GM10248 (cell line): ENCODE measurements at regions of chr1 and their contacts with region 1.

Region 1: DNA sequence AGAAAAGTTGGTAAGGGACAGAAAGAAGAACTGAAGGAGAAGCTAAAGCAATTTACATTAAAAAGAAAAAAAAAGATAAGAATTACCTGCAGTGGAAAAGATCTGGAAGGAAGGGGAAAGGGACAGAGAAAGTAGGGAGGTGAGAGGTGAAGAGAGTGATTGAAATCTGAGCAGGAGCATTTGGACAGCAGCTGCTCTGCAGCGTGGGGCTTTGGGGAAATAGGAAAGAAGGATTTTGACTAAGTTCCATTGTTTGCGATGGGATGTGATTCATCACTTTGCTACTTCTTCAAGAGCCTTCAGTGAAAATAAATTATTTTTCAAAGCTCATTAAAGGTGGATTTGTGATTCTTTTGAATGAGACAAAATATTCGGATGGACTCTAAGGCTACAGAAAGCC is 26.1 kb upstream of the NMNAT2 start:
- DNase-seq: no peak
- CTCF ChIP-seq: no peak

Region 2: DNA sequence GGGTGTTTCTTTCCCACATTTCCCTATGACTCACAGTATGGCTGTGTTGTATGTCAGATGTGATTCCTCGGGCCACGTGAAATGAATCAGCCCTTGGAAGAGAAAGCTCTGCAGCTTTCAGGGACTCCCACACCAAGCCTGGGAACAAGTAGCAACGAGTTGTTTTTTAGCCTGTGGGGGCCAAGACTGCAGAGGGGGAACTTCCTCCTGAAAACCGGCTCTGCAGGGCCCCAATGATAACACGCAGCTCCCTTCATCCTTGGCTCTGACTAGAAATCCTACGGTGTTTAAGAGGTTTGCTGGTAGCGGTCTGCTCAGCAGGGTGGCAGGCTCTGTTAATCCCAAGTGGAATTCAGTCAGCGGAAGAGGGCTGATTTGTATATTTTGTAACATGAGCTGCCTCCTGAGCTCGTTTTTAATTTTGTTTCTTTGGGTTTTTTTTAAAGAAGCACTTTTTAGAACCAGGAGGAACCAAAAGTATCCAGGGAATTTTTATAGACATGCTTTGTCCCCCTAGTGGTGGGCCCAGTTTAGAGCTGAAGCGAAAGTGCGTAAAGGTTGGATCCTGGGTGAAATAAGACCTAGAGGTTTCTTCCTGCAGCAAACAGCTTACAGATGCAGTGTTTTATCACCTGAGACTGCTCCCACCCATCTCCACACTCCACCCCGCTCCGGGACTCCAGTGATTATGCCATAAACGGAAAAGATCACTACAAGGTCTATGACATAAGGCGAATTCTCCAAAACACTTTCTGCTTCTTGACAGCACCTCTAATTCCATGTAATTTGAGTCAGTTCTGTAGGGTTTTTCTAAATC is 209.4 kb before region 1 on chr1:
- CTCF ChIA-PET with region 1: no interaction called
- POLR2A ChIA-PET with region 1: no interaction called
- DNase-seq: no peak
- CTCF ChIP-seq: peak; percentile 9

Region 3: GRCh38 chr1:183432548-183432875 is 11.7 kb before region 1 on chr1:
- CTCF ChIA-PET with region 1: interaction called, 13 read pairs
- POLR2A ChIA-PET with region 1: no interaction called
- DNase-seq: no peak
- CTCF ChIP-seq: no peak